IMR-90 (cell line): ENCODE measurements at regions of chr4 and their contacts with region 1.

Region 1: DNA sequence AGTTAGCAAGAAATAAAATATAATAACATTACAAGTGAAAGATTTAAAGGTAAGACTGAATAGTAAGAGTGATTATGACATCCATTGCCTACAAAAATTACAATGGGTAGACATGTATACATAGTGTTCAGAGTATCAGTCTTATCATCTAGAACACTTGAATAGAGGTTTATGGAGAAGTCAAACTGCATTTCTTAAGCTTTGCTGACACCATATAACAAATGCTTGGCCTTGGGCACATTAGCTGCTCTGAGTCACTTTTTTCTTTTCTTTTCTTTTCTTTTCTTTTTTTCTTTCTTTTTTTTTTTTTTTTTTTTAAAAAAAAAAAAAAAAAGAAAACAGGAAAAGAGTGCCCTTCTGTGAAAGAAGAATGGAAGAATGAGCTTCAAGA is 220.0 kb downstream of the SPCS3 start:
- DNase-seq: peak; percentile 34
- ATAC-seq: no peak
- H3K4me3 ChIP-seq: no peak overlapping the region
- H3K27ac ChIP-seq: no peak overlapping the region
- H3K4me1 ChIP-seq: peaks cover 3% of the 10 kb centered on the region; the same call in 1 of the 2 replicates
- H3K27me3 ChIP-seq: no peaks in the 10 kb centered on the region
- CTCF ChIP-seq: no peak
- POLR2A ChIP-seq: no peak
- RAD21 ChIP-seq: no peak

Region 2: DNA sequence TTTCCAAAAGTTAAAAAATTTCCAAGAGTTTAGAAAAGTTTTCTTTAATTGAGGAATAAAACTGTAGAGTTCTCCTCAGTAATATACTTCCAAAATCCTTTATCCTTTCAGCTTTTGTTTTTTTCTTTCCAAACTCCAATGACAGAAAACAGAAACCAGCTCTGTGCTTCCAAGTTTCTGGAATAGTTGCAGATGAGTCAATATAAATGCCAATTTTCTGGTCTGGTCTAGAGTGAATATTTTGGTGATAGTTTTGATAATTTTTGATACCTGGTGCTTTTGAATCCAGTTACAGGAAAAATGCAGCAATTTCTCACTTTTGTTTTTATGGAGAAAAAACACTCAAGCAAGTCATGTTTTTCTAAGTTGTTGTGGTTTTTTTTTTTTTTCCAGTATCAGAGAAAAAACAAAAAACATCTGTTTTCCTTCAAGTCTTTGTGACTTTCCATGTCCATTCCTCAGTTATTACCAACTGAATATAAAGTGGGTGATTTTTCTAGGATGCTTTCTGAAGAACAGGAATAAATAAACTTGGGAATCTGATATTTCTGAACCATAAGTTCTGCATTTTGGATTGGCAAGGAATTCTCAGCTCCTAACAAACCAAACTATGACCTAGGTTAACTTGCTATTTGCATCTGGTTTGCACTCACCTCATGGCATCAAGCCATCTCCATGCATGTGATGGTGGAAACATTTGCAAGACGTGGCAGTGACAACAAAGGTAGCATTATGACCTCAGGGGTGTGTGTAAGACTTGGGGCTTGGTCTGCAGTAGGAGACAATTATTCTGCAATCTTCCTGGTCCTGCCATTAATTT is 113.8 kb after region 1 on chr4:
- CTCF ChIA-PET with region 1: no interaction called
- POLR2A ChIA-PET with region 1: interaction called, 19 read pairs
- dilution Hi-C with region 1: no loop called
- in situ Hi-C with region 1: no loop called
- intact Hi-C with region 1: no loop called
- DNase-seq: peak; percentile 31
- ATAC-seq: no peak
- H3K4me3 ChIP-seq: no peak overlapping the region
- H3K27ac ChIP-seq: no peak overlapping the region
- H3K4me1 ChIP-seq: 0 out of 2 replicates have a peak, but pooled peaks cover 1% of the 10 kb centered on the region
- H3K27me3 ChIP-seq: no peaks in the 10 kb centered on the region
- CTCF ChIP-seq: no peak
- POLR2A ChIP-seq: no peak
- RAD21 ChIP-seq: no peak